Right ventricle myocardium superior (tissue), 1 donor: ENCODE measurements at regions of chr9 and their contacts with region 1.

Region 1: DNA sequence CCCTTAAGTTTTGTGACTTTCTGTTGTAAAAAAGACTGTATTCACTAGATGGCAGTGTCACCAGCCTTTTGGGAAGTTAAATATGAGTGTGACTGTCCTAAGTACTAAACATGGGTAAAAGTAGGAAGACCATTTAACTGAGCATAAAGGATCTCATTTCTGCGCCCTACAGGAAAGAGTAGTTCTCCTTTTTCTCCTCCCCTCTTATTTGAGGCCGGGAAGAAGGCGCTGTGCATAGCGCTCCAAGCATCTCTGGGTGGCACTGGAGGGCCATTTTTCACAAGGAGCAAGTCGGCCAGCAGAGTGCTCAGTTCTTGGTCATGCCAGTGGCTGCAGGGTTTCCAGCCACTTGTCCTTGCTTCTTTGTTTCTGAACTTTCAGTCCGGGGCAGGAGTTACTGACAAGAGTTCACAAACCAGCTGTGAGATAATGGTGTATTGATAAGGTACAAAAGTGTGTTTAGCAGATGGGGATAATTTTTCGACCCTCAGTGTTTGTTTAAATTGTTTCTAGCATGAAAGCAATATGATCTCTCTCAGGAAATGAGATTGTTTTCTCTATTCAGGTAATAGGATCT is 227.6 kb upstream of the DMRT1 start:
- DNase-seq: peak; percentile 75
- ATAC-seq: peak; percentile 87

Region 2: GRCh38 chr9:693201-694091 is 79.6 kb after region 1 on chr9:
- intact Hi-C with region 1: loop called (anchors 10 kb)
- DNase-seq: no peak
- ATAC-seq: peak; percentile 81

Region 3: DNA sequence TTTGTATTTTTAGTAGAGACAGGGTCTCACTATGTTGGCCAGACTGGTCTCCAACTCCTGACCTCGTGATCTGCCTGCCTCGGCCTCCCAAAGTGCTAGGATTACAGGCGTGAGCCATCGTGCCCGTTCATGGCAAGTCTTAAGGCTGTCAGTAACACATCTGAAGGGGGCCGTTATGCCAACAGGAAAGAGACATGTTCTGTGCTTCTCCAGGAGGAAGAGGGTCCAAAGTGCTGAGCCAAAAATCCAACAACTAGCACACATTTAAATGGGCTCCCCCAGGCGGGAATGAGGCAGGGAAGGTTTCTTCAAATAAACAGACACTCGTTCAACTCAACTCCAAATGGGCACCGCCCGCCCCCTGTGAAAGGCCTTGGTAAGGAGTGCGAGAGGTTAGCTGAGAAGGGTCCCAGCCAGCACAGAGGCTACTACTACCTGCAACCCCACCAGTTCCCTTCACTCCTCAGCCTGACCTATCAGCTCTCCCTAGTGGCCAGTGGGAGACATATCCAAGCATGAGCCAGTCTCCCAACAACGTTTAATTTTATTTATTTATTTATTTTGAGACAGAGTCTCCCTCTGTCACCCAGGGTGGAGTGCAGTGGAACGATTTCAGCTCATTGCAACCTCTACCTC is 143.5 kb after region 1 on chr9:
- intact Hi-C with region 1: loop called (anchors 5 kb)
- DNase-seq: no peak
- ATAC-seq: peak; percentile 77

Region 4: GRCh38 chr9:1009101-1009707 is 395.3 kb after region 1 on chr9:
- intact Hi-C with region 1: loop called (anchors 10 kb)
- DNase-seq: peak; percentile 90
- ATAC-seq: peak; percentile 97